AG04449 (cell line): ENCODE measurements at regions of chr5 and their contacts with region 1.

Region 1: DNA sequence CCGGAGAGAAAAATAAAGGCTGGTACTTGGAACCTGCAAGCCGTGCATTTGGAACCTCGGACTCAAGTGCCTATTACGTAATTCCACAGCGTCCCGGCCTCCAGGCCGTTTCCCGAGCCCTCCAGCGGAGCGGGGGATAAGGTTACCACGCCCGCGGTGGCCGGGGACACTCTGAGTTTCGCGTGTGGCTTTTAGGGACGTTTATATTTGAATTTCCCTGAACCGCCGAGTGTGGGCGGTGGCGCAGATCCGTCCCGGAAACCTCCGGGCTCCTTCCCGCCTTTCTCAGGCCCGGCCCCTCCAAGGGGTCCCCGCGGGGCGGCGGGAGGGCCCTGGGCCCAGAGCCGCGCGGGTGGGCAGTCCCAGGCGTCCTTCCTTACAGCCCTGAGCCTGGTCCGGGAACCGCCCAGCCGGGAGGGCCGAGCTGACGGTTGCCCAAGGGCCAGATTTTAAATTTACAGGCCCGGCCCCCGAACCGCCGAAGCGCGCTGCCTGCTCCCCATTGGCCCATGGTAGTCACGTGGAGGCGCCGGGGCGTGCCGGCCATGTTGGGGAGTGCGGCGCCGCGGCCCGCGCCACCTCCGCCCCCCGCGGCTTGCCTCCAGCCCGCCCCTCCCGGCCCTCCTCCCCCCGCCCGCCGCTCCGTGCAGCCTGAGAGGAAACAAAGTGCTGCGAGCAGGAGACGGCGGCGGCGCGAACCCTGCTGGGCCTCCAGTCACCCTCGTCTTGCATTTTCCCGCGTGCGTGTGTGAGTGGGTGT is at the start of gene LMNB1:
- DNase-seq: peak; percentile 37
- H3K4me3 ChIP-seq: peak within 1 kb of the TSS; percentile 93
- CTCF ChIP-seq: no peak

Region 2: GRCh38 chr5:126656396-126657007 is 120.2 kb before region 1 on chr5:
- CTCF ChIA-PET with region 1: interaction called, 98 read pairs
- POLR2A ChIA-PET with region 1: no interaction called
- DNase-seq: no peak
- H3K4me3 ChIP-seq: no peak overlapping the region
- CTCF ChIP-seq: peak; percentile 66

Region 3: GRCh38 chr5:126686451-126687126 is 90.1 kb before region 1 on chr5:
- CTCF ChIA-PET with region 1: interaction called, 16 read pairs
- POLR2A ChIA-PET with region 1: no interaction called
- DNase-seq: no peak
- H3K4me3 ChIP-seq: no peak overlapping the region
- CTCF ChIP-seq: no peak

Region 4: DNA sequence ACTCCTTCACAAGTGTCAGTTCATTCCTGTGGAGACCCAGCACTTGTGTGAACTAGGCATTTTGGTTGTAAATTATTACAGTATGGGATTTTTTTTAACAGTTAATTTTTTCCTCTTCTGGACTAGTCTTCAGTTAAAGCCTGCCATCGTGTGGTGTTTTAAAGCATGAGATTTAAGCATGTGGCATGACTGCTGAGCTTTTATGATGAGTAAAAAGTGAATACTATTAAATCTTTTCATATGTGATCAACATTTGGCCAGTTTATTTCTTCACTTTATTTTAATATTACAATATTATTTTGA is 25.3 kb after region 1 on chr5:
- CTCF ChIA-PET with region 1: interaction called, 96 read pairs
- POLR2A ChIA-PET with region 1: no interaction called
- DNase-seq: no peak
- H3K4me3 ChIP-seq: no peak overlapping the region
- CTCF ChIP-seq: peak; percentile 28

Region 5: GRCh38 chr5:127053049-127053448 is 276.4 kb after region 1 on chr5:
- CTCF ChIA-PET with region 1: no interaction called
- POLR2A ChIA-PET with region 1: no interaction called
- DNase-seq: no peak
- H3K4me3 ChIP-seq: no peak overlapping the region
- CTCF ChIP-seq: no peak